HEK293 (cell line): ENCODE measurements at regions of chr5 and their contacts with region 1.

Region 1: DNA sequence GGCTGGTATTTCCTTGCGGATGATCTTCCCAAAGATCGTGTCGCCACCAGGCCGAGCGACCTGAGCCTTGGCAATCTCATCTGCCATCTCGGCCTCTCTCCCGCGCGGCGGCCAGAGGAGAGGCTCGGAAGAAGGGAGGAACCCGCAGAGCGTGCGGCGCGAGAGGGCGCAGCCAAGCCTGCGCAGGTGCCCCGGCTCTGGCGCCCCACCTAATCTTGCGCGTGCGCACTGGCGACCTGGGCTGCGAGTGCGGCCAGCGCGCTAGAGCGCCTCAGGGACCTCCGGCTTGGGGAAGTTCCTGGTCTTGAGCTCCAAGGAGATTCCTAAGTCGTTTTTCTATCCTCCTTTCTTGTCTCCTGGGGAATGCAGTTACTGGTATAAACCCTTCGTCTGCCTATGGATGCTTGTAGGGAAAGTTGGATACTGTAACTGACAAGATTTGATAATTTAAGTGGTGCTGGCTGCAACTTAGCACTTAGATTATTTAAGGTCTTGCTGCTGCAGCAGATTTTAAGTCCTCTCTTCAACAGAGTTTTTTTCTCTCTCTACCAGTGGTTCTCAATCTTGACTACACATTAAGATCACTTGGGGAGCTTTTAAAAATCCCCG is at the start of gene HINT1:
- H3K4me3 ChIP-seq: peak within 1 kb of the TSS; percentile 93
- H3K27ac ChIP-seq: peak within 1 kb of the TSS; percentile 99
- H3K4me1 ChIP-seq: 0 out of 2 replicates have a peak, but pooled peaks cover 3% of the 10 kb centered on the region
- CTCF ChIP-seq: peak; percentile 86

Region 2: DNA sequence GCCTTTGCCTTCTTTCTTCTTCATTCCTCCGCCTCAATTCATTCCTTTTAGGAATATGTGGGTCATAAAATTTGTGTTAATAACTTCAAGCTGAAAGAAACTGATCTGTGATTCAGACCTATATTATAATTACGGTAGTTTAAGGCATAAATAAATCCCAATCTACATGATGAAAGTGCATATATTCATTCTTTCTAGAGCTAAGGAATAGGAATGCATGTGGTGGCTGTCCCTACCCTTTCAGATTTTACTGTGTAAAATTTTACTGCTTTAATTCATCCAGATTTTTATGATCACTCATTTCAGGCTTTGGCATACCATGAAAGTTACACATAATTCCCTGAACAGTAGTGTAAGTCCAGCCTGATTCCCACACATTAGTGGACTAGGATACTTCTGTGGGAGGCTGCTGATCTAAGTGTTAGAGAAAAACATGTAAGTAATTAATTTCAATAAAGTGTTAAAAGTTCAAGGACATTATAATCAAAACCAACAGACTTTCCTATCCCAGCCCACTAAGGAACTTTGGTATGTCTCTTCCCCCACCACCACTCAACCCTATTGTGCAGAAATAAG is 83.2 kb before region 1 on chr5:
- CTCF ChIA-PET with region 1: no interaction called
- POLR2A ChIA-PET with region 1: no interaction called
- H3K4me3 ChIP-seq: no peak overlapping the region
- H3K27ac ChIP-seq: no peak overlapping the region
- H3K4me1 ChIP-seq: no peaks in the 10 kb centered on the region
- CTCF ChIP-seq: no peak

Region 3: GRCh38 chr5:131218392-131218791 is 53.2 kb after region 1 on chr5:
- CTCF ChIA-PET with region 1: no interaction called
- POLR2A ChIA-PET with region 1: no interaction called
- H3K4me3 ChIP-seq: no peak overlapping the region
- H3K27ac ChIP-seq: no peak overlapping the region
- H3K4me1 ChIP-seq: no peaks in the 10 kb centered on the region
- CTCF ChIP-seq: no peak

Region 4: GRCh38 chr5:131263648-131264450 is 98.6 kb after region 1 on chr5 and contains the start of gene CDC42SE2:
- CTCF ChIA-PET with region 1: interaction called, 3 read pairs
- POLR2A ChIA-PET with region 1: interaction called, 22 read pairs
- H3K4me3 ChIP-seq: peak within 1 kb of the TSS; percentile 98
- H3K27ac ChIP-seq: peak within 1 kb of the TSS; percentile 90
- H3K4me1 ChIP-seq: no peaks in the 10 kb centered on the region; the same call in 1 of the 2 replicates
- CTCF ChIP-seq: peak; percentile 51; the same call in 1 of the 2 replicates

Region 5: GRCh38 chr5:131706281-131706680 is 541.1 kb after region 1 on chr5:
- CTCF ChIA-PET with region 1: no interaction called
- POLR2A ChIA-PET with region 1: no interaction called
- H3K4me3 ChIP-seq: no peak overlapping the region
- H3K27ac ChIP-seq: no peak overlapping the region
- H3K4me1 ChIP-seq: no peaks in the 10 kb centered on the region
- CTCF ChIP-seq: no peak